CD4-positive, alpha-beta memory T cell (primary cell): ENCODE measurements at regions of chr22 and their contacts with region 1.

Region 1: DNA sequence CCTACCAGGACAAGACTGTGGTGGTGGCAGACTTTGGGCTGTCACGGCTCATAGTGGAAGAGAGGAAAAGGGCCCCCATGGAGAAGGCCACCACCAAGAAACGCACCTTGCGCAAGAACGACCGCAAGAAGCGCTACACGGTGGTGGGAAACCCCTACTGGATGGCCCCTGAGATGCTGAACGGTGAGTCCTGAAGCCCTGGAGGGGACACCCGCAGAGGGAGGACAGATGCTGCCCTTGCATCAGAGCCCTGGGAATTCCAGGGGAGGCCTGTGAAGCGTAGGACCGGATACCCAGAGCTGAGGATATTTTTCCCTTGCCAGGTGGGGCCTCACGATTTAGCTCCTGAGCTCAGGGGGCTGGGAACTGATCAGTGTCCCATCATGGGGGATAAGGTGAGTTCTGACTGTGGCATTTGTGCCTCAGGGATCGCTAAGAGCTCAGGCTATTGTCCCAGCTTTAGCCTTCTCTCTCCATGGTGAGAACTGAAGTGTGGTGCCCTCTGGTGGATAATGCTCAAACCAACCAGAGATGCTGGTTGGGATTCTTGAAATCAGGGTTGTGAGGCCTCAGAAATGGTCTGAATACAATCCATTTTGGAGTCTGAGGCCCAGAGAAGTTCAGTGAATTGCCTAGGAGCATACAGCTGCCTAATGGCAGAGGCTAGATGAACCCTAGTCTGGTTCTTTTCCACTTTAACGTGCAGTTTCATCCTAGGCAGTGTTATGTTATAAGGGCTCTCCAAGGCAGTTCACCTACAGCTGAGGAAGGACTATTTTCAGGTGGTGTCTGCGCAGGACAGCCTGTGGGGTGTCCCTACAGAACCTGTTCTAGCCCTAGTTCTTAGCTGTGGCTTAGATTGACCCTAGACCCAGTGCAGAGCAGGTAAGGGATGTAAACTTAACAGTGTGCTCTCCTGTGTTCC is 19.5 kb downstream of the PIK3IP1 start:
- DNase-seq: peak in 3 of 5 donors; percentile 44 to 56 (median 51)
- H3K4me3 ChIP-seq: no peak overlapping the region
- H3K4me3 Mint-ChIP-seq: peak overlapping the region in 1 of 8 donors; percentile 2
- H3K27ac ChIP-seq: no peak overlapping the region
- H3K27ac Mint-ChIP-seq: peak overlapping the region; percentile 61 to 84 (median 73)
- H3K4me1 ChIP-seq: peaks cover 52% of the 10 kb centered on the region
- H3K4me1 Mint-ChIP-seq: peaks cover 30 to 77% (median 51%) of the 10 kb centered on the region in 4 donors
- H3K27me3 ChIP-seq: no peaks in the 10 kb centered on the region
- H3K27me3 Mint-ChIP-seq: no peaks in the 10 kb centered on the region

Region 2: GRCh38 chr22:30763815-30764686 is 508.7 kb before region 1 on chr22:
- CTCF ChIA-PET with region 1: interaction called, 5 read pairs
- POLR2A ChIA-PET with region 1: no interaction called
- intact Hi-C with region 1: loop called (anchors 2 kb)
- DNase-seq: peak; percentile 52 to 67 (median 57)
- H3K4me3 ChIP-seq: no peak overlapping the region
- H3K4me3 Mint-ChIP-seq: no peak overlapping the region
- H3K27ac ChIP-seq: no peak overlapping the region
- H3K27ac Mint-ChIP-seq: no peak overlapping the region
- H3K4me1 ChIP-seq: no peaks in the 10 kb centered on the region
- H3K4me1 Mint-ChIP-seq: no peaks in the 10 kb centered on the region
- H3K27me3 ChIP-seq: no peaks in the 10 kb centered on the region
- H3K27me3 Mint-ChIP-seq: no peaks in the 10 kb centered on the region

Region 3: GRCh38 chr22:31160328-31160978 is 112.3 kb before region 1 on chr22:
- CTCF ChIA-PET with region 1: interaction called, 13 read pairs
- POLR2A ChIA-PET with region 1: interaction called, 4 read pairs
- intact Hi-C with region 1: no loop called
- DNase-seq: peak in 3 of 5 donors; percentile 2 to 14 (median 12)
- H3K4me3 ChIP-seq: peak overlapping the region; percentile 71 to 90
- H3K4me3 Mint-ChIP-seq: peak overlapping the region; percentile 96 to 100 (median 99)
- H3K27ac ChIP-seq: peak overlapping the region; percentile 79
- H3K27ac Mint-ChIP-seq: peak overlapping the region; percentile 89 to 100 (median 99)
- H3K4me1 ChIP-seq: peaks cover 23% of the 10 kb centered on the region
- H3K4me1 Mint-ChIP-seq: peaks cover 25 to 46% (median 31%) of the 10 kb centered on the region in 4 donors
- H3K27me3 ChIP-seq: no peaks in the 10 kb centered on the region
- H3K27me3 Mint-ChIP-seq: peaks cover 0 to 1% of the 10 kb centered on the region in 2 donors

Region 4: GRCh38 chr22:31218565-31219262 is 54.1 kb before region 1 on chr22:
- CTCF ChIA-PET with region 1: interaction called, 113 read pairs
- POLR2A ChIA-PET with region 1: interaction called, 86 read pairs
- intact Hi-C with region 1: no loop called
- DNase-seq: no peak
- H3K4me3 ChIP-seq: no peak overlapping the region
- H3K4me3 Mint-ChIP-seq: no peak overlapping the region
- H3K27ac ChIP-seq: no peak overlapping the region
- H3K27ac Mint-ChIP-seq: peak overlapping the region; percentile 59 to 88 (median 81)
- H3K4me1 ChIP-seq: peaks cover 47% of the 10 kb centered on the region
- H3K4me1 Mint-ChIP-seq: peaks cover 42 to 75% (median 53%) of the 10 kb centered on the region in 4 donors
- H3K27me3 ChIP-seq: no peaks in the 10 kb centered on the region
- H3K27me3 Mint-ChIP-seq: no peaks in the 10 kb centered on the region

Region 5: GRCh38 chr22:31248138-31248745 is 24.5 kb before region 1 on chr22:
- CTCF ChIA-PET with region 1: interaction called, 71 read pairs
- POLR2A ChIA-PET with region 1: interaction called, 26 read pairs
- intact Hi-C with region 1: no loop called
- DNase-seq: peak; percentile 61 to 81 (median 69)
- H3K4me3 ChIP-seq: no peak overlapping the region
- H3K4me3 Mint-ChIP-seq: peak overlapping the region; percentile 22 to 85 (median 78)
- H3K27ac ChIP-seq: no peak overlapping the region
- H3K27ac Mint-ChIP-seq: peak overlapping the region in 6 of 7 donors; percentile 61 to 87 (median 78)
- H3K4me1 ChIP-seq: peaks cover 42% of the 10 kb centered on the region
- H3K4me1 Mint-ChIP-seq: peaks cover 22 to 50% (median 27%) of the 10 kb centered on the region in 4 donors
- H3K27me3 ChIP-seq: no peaks in the 10 kb centered on the region
- H3K27me3 Mint-ChIP-seq: no peaks in the 10 kb centered on the region

Region 6: DNA sequence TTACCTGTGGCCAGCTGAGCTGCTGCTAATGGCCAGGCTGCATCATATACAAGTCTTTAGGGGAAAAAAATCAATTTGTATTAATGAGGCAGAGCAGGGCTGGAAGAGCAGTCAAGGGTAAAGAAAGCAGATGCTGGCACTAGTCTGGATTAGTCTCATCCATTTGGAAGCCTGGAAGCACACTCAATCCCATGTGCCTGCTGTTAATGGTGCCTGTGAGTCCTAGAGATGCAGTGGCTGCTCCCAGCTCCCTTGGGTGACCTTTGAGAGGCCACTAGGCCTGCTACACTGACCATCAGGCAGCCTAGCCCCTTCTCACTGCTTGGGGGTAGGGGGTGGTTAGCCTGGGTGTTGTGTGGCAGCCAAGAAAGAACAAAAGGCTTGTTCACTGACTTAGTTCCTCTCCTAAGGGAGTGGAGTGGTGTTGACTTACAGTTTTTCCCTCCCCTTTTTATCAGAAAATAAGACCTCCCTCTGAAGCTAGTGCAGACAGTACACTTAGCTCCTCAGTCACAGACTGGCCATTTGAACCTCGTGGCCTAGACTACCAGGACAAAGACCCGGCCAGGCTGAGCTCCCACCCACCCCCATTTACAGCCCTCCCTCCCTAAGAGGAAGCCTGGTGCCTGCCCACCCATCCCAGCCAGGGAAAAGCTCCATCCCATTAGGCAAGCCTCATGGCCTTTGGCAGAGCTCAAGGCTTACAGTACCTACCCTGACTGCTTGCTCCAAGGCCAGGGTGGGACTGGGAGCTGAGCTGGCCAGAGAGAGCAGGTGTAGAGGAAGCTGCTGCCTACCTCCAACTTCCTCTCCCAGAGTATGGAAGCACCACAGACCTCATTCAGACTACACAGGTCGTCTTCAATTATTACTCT is 11.7 kb after region 1 on chr22:
- CTCF ChIA-PET with region 1: interaction called, 140 read pairs
- POLR2A ChIA-PET with region 1: interaction called, 1,203 read pairs
- intact Hi-C with region 1: no loop called
- DNase-seq: no peak
- H3K4me3 ChIP-seq: peak overlapping the region; percentile 14 to 44
- H3K4me3 Mint-ChIP-seq: peak overlapping the region; percentile 72 to 100 (median 88)
- H3K27ac ChIP-seq: peak overlapping the region; percentile 68
- H3K27ac Mint-ChIP-seq: peak overlapping the region; percentile 99 to 100 (median 100)
- H3K4me1 ChIP-seq: peaks cover 100% of the 10 kb centered on the region
- H3K4me1 Mint-ChIP-seq: peaks cover 69 to 100% (median 84%) of the 10 kb centered on the region in 4 donors
- H3K27me3 ChIP-seq: no peaks in the 10 kb centered on the region
- H3K27me3 Mint-ChIP-seq: no peaks in the 10 kb centered on the region

Region 7: GRCh38 chr22:31465307-31465706 is 192.5 kb after region 1 on chr22:
- CTCF ChIA-PET with region 1: no interaction called
- POLR2A ChIA-PET with region 1: no interaction called
- intact Hi-C with region 1: no loop called
- DNase-seq: no peak
- H3K4me3 ChIP-seq: no peak overlapping the region
- H3K4me3 Mint-ChIP-seq: no peak overlapping the region
- H3K27ac ChIP-seq: no peak overlapping the region
- H3K27ac Mint-ChIP-seq: no peak overlapping the region
- H3K4me1 ChIP-seq: no peaks in the 10 kb centered on the region
- H3K4me1 Mint-ChIP-seq: peaks cover 0 to 9% (median 0%) of the 10 kb centered on the region in 4 donors
- H3K27me3 ChIP-seq: no peaks in the 10 kb centered on the region
- H3K27me3 Mint-ChIP-seq: no peaks in the 10 kb centered on the region